IMR-90 (cell line): ENCODE measurements at regions of chr5 and their contacts with region 1.

Region 1: DNA sequence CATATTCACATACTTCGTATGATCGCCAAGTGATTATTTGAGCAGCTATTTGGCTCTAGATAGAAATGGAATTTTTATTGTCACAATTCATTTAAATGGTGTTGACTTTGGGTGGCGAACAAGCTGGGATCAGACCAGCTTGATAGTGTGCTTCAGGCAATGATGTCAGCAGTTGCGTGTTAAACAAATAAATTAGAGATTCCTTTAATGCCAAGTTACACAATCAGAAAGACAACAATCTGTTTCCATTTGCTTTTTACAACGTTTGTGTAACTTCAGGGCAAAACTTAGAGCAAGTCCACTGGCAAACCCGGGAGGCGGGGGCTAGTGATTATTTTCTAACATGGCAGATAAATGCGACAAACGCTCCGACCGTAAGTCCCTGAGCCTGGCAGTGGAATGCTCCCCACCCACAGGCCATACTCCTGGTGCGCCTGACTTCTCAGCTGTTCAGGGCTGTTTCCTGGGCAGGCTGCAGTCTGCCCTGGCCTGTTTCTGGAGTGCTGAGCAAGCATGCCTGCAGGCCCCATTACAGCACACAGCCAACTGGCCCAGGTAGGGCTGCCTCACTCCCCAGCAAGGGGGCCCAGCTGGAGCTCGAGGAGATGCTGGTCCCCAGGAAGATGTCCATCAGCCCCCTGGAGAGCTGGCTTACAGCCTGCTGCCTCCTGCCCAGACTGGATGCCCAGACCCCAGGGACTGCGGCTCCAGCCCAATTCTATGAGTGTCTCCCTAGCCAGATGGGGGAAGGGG is 88.7 kb downstream of the BASP1 start:
- DNase-seq: peak; percentile 84
- ATAC-seq: peak; percentile 76
- H3K4me3 ChIP-seq: no peak overlapping the region
- H3K27ac ChIP-seq: peak overlapping the region; percentile 89
- H3K4me1 ChIP-seq: peaks cover 9% of the 10 kb centered on the region
- H3K27me3 ChIP-seq: no peaks in the 10 kb centered on the region
- CTCF ChIP-seq: no peak
- POLR2A ChIP-seq: no peak
- RAD21 ChIP-seq: no peak

Region 2: GRCh38 chr5:17333755-17334154 is 27.6 kb after region 1 on chr5:
- CTCF ChIA-PET with region 1: no interaction called
- POLR2A ChIA-PET with region 1: no interaction called
- dilution Hi-C with region 1: no loop called
- in situ Hi-C with region 1: no loop called
- intact Hi-C with region 1: no loop called
- DNase-seq: no peak
- ATAC-seq: no peak
- H3K4me3 ChIP-seq: no peak overlapping the region
- H3K27ac ChIP-seq: no peak overlapping the region
- H3K4me1 ChIP-seq: 0 out of 2 replicates have a peak, but pooled peaks cover 1% of the 10 kb centered on the region
- H3K27me3 ChIP-seq: no peaks in the 10 kb centered on the region; the same call in 1 of the 2 replicates
- CTCF ChIP-seq: no peak
- POLR2A ChIP-seq: no peak
- RAD21 ChIP-seq: no peak

Region 3: GRCh38 chr5:17379100-17379951 is 73.2 kb after region 1 on chr5:
- CTCF ChIA-PET with region 1: no interaction called
- POLR2A ChIA-PET with region 1: no interaction called
- dilution Hi-C with region 1: no loop called
- in situ Hi-C with region 1: no loop called
- intact Hi-C with region 1: loop called (anchors 5 kb)
- DNase-seq: peak; percentile 21
- ATAC-seq: no peak
- H3K4me3 ChIP-seq: no peak overlapping the region
- H3K27ac ChIP-seq: peak overlapping the region; percentile 87; the same call in 1 of the 2 replicates
- H3K4me1 ChIP-seq: peaks cover 29% of the 10 kb centered on the region
- H3K27me3 ChIP-seq: no peaks in the 10 kb centered on the region
- CTCF ChIP-seq: no peak
- POLR2A ChIP-seq: no peak
- RAD21 ChIP-seq: no peak